ENCODE measurements at regions of chr1 and their contacts with region 1.

Region 1: GRCh38 chr1:101288491-101288944 is 51.7 kb downstream of the S1PR1 start:
- DNase-seq: peak; percentile 87
- H3K4me3 Mint-ChIP-seq: no peak overlapping the region
- H3K27ac Mint-ChIP-seq: no peak overlapping the region
- H3K4me1 Mint-ChIP-seq: peaks cover 13% of the 10 kb centered on the region
- H3K27me3 Mint-ChIP-seq: no peaks in the 10 kb centered on the region
- CTCF ChIP-seq: peak; percentile 85

Region 2: DNA sequence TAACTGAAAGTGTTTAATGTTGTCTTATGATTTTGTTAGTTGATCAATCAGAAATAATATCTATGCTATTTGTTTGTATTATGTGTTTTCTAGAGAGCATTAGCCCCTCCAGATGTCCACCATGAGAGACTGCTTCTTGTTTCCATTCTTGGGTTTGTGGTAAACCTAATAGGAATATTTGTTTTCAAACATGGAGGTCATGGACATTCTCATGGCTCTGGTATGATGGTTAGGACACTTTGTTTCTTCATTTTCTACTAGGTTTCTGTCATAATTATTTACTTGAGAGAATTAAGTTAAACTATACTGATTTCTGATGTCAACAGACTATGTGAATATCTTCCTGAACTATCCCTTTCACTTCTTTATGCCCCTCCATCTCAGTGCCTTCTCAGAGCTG is 376.5 kb before region 1 on chr1:
- CTCF ChIA-PET with region 1: interaction called, 59 read pairs
- POLR2A ChIA-PET with region 1: interaction called, 6 read pairs
- intact Hi-C with region 1: no loop called
- DNase-seq: no peak
- H3K4me3 Mint-ChIP-seq: no peak overlapping the region
- H3K27ac Mint-ChIP-seq: no peak overlapping the region
- H3K4me1 Mint-ChIP-seq: peaks cover 14% of the 10 kb centered on the region
- H3K27me3 Mint-ChIP-seq: no peaks in the 10 kb centered on the region
- CTCF ChIP-seq: no peak

Region 3: DNA sequence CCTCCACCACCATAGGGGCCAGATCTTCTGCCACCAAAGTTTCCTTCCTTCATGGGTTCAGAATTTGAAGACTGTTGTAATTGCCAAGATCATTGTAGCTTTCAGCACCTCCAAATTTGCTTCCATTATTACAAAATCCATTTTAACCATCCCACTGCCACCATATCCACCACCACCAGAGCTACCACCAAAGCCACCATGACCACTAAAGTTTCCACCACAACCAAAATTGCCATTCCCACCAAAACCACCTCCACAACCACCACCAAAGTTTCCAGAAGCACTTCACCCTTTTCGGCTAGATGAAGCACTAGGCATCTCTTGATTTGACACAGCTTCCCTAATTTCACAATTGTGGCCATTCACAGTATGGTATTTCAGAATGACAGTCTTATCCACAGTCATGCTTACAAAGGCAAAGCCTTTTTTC is 347.4 kb before region 1 on chr1:
- CTCF ChIA-PET with region 1: interaction called, 11 read pairs
- POLR2A ChIA-PET with region 1: no interaction called
- intact Hi-C with region 1: no loop called
- DNase-seq: no peak
- H3K4me3 Mint-ChIP-seq: no peak overlapping the region
- H3K27ac Mint-ChIP-seq: peak overlapping the region; percentile 46
- H3K4me1 Mint-ChIP-seq: no peaks in the 10 kb centered on the region
- H3K27me3 Mint-ChIP-seq: no peaks in the 10 kb centered on the region
- CTCF ChIP-seq: no peak

Region 4: DNA sequence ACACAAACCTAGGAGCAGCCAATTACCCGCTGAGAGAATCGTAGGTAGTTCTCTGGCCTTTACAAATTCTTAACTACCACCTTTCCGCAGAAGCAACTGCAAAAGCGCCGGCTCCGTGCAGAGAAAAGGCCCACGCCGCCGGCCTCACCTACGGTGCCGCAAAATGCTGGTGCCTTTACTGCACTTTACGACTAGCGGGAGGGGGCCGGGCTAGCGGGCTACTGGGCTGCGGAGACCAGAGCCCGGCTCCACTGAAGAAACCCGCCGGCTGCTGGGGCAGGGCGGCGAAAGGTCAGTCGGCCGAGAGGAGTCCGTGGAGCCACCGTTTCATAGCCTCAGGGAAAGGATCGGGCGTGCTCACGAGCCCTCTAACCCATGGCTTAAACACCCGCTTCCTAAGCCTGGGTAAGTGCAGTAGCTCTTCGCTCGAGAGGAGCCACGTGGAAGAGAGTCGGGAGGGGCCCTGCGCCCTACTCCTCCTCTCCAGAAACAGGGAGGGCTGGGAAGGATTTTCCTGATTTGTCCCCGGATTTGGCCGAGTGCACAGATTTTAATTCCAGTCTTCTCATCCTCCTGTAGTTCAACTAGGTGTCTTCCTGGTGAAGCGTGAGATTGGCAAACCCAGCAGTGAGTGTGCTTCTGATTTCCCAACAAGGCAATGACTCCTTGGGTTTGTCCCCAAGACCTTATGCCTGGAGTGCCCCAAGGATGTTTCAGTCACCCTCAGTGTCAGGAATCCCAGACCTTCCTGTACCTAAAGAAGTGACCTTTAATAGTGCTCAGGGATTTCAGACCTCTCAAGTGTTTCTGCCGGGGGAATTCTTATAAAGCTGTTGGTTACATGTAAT is 262.6 kb before region 1 on chr1 and contains the start of gene DPH5:
- CTCF ChIA-PET with region 1: interaction called, 10 read pairs
- POLR2A ChIA-PET with region 1: no interaction called
- intact Hi-C with region 1: loop called (anchors 10 kb)
- DNase-seq: peak; percentile 90
- H3K4me3 Mint-ChIP-seq: peak within 1 kb of the TSS; percentile 78
- H3K27ac Mint-ChIP-seq: peak within 1 kb of the TSS; percentile 79
- H3K4me1 Mint-ChIP-seq: peaks cover 14% of the 10 kb centered on the region
- H3K27me3 Mint-ChIP-seq: no peaks in the 10 kb centered on the region
- CTCF ChIP-seq: no peak
- total RNA-seq, gene DPH5: 63.5 and 76.8 TPM in 2 replicates

Region 5: GRCh38 chr1:101081496-101082488 is 206.7 kb before region 1 on chr1:
- CTCF ChIA-PET with region 1: no interaction called
- POLR2A ChIA-PET with region 1: no interaction called
- intact Hi-C with region 1: no loop called
- DNase-seq: no peak
- H3K4me3 Mint-ChIP-seq: no peak overlapping the region
- H3K27ac Mint-ChIP-seq: no peak overlapping the region
- H3K4me1 Mint-ChIP-seq: no peaks in the 10 kb centered on the region
- H3K27me3 Mint-ChIP-seq: no peaks in the 10 kb centered on the region
- CTCF ChIP-seq: no peak

Region 6: DNA sequence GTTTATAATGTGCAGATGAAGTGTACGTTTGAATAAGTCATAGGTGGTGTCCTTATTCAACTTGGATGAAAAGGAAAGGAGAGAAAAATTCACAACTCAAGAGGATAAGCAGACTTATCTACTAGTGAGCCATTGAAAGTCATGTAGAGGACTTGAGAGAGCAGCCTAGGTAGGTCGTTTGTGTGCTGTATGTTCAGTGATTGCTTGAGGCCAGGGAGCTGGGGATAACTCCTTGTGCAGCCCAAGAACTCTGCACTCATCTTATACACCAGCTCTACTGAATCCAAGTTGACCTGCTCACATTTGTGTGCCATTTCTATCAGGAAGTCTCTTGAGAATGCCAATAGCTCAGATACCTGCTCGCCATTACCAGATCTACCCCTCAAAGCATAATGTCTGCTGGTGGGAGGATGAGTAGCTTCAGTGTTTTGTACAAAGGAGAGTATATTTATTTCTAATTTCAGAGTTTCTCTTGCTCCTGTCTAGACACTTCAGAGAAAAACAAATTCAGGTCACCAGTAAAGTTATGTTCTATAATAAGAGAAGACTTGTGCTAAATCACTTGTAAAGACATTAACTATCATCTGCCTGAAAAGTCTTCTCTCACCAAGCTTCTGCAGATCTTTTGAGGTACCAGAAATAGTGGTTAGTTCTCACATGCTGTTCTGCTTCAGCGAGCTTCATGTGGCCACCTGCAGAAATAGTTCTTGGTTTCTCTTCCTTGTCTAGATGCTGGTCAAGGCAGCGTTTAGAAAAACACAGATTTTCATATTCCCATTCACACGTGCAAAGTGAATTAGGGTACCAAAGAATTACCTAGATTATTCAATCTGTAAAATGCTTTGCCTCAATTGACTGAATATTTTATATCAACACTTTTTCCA is 40.9 kb before region 1 on chr1:
- CTCF ChIA-PET with region 1: interaction called, 31 read pairs
- POLR2A ChIA-PET with region 1: no interaction called
- intact Hi-C with region 1: no loop called
- DNase-seq: no peak
- H3K4me3 Mint-ChIP-seq: no peak overlapping the region
- H3K27ac Mint-ChIP-seq: no peak overlapping the region
- H3K4me1 Mint-ChIP-seq: no peaks in the 10 kb centered on the region
- H3K27me3 Mint-ChIP-seq: no peaks in the 10 kb centered on the region
- CTCF ChIP-seq: no peak

Region 7: DNA sequence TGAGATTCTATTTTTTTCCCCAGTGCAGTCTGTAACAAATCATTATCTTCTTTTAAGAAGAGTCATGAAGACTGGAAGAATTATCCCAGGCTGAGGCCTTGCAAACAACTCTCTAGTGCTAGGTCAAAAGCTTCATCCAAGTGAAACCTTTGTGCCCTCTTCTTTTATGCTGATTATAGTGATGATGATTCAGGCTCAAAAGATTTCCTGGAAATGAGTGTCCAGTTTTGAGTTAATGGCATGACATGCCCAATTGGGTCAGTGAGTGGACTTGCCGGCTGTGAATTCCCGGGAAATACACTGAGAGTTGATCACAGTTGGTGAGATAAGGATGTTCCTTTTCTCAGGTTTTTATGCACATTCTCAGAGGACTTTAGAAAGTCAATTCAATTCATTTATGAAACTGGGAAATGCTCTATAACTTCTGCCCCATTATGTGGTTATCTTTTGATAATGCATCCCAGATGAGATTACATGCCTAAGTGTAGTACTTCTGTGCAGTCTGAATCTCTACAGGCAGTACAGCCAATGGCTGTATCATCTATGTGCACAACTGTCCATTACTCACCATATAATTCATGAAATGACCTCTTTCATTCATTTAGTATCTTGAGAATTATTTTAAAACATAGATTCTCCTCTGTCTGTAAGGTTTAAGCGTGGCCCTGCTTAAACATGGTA is 14.5 kb after region 1 on chr1:
- CTCF ChIA-PET with region 1: interaction called, 56 read pairs
- POLR2A ChIA-PET with region 1: interaction called, 3 read pairs
- intact Hi-C with region 1: no loop called
- DNase-seq: no peak
- H3K4me3 Mint-ChIP-seq: no peak overlapping the region
- H3K27ac Mint-ChIP-seq: no peak overlapping the region
- H3K4me1 Mint-ChIP-seq: no peaks in the 10 kb centered on the region
- H3K27me3 Mint-ChIP-seq: peaks cover 86% of the 10 kb centered on the region
- CTCF ChIP-seq: no peak

Region 8: GRCh38 chr1:101379950-101380349 is 91.4 kb after region 1 on chr1:
- CTCF ChIA-PET with region 1: no interaction called
- POLR2A ChIA-PET with region 1: no interaction called
- intact Hi-C with region 1: no loop called
- DNase-seq: no peak
- H3K4me3 Mint-ChIP-seq: no peak overlapping the region
- H3K27ac Mint-ChIP-seq: no peak overlapping the region
- H3K4me1 Mint-ChIP-seq: no peaks in the 10 kb centered on the region
- H3K27me3 Mint-ChIP-seq: peaks cover 58% of the 10 kb centered on the region
- CTCF ChIP-seq: no peak

Region 9: DNA sequence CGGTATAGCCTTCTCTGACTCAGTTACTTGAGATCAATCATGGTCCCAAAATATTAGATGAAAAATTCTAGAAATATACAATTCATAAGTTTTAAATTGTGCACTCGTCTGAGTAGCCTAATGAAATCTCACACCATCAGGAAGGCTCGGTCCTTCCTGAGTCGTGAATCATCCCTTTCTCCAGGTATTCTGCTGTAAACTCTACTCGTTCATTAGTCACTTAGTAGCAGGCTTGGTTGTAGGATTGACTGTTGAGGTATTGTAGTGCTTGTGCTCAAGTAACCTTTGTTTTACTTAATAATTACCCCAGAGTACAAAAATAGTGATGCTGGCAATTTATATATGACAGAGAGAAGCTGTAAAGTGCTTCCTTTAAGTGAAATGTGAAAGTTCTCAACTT is 469.5 kb after region 1 on chr1:
- CTCF ChIA-PET with region 1: no interaction called
- POLR2A ChIA-PET with region 1: no interaction called
- intact Hi-C with region 1: no loop called
- DNase-seq: peak; percentile 29
- H3K4me3 Mint-ChIP-seq: no peak overlapping the region
- H3K27ac Mint-ChIP-seq: no peak overlapping the region
- H3K4me1 Mint-ChIP-seq: no peaks in the 10 kb centered on the region
- H3K27me3 Mint-ChIP-seq: peaks cover 45% of the 10 kb centered on the region
- CTCF ChIP-seq: no peak